Heart right ventricle (tissue), 16 donors: ENCODE measurements at regions of chr2 and their contacts with region 1.

Region 1: GRCh38 chr2:72150157-72150865 is 2.6 kb upstream of the CYP26B1 start:
- DNase-seq: peak; percentile 55 to 84
- ATAC-seq: peak; percentile 68 to 91 (median 80)
- H3K4me3 ChIP-seq: peak overlapping the region in 8 of 10 donors; percentile 18 to 75 (median 58)
- H3K27ac ChIP-seq: no peak overlapping the region
- H3K4me1 ChIP-seq: peaks cover 22 to 47% (median 42%) of the 10 kb centered on the region in 9 donors
- H3K27me3 ChIP-seq: peaks cover 15 to 83% (median 70%) of the 10 kb centered on the region in 7 donors
- CTCF ChIP-seq: peak; percentile 79 to 90 (median 85)

Region 2: DNA sequence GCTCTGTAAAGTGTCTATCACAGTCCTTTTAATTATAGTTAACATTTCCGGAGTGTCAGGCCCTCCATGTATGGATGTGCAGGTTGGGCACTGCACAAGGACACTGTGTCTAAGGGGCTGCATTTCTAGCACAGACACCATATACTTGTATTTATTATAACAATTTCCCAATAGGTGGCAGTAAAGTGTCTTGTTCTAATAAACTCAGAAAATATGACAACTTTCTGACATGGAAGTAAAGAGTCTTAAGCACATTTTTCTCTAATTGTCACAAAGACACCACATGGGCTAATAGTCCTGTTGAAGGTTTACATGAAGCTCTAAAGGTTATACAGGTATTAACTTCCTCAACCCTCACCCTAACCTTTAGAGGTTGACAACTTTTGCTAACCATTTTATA is 540.4 kb before region 1 on chr2:
- intact Hi-C with region 1: loop called in 6 of 10 experiments (anchors 5 to 10 kb)
- DNase-seq: no peak
- ATAC-seq: peak in 2 of 8 donors; percentile 27 to 36
- H3K4me3 ChIP-seq: no peak overlapping the region
- H3K27ac ChIP-seq: peak overlapping the region in 1 of 10 donors; percentile 0
- H3K4me1 ChIP-seq: peaks cover 14 to 46% (median 32%) of the 10 kb centered on the region in 9 donors
- H3K27me3 ChIP-seq: no peaks in the 10 kb centered on the region
- CTCF ChIP-seq: peak in 7 of 9 donors; percentile 30 to 59 (median 48)

Region 3: GRCh38 chr2:71807975-71808451 is 342.3 kb before region 1 on chr2:
- intact Hi-C with region 1: loop called in 9 of 10 experiments (anchors 2 to 5 kb)
- DNase-seq: peak; percentile 59 to 65
- ATAC-seq: peak; percentile 85 to 96 (median 93)
- H3K4me3 ChIP-seq: no peak overlapping the region
- H3K27ac ChIP-seq: no peak overlapping the region
- H3K4me1 ChIP-seq: peaks cover 0 to 18% (median 0%) of the 10 kb centered on the region in 9 donors
- H3K27me3 ChIP-seq: no peaks in the 10 kb centered on the region
- CTCF ChIP-seq: no peak

Region 4: DNA sequence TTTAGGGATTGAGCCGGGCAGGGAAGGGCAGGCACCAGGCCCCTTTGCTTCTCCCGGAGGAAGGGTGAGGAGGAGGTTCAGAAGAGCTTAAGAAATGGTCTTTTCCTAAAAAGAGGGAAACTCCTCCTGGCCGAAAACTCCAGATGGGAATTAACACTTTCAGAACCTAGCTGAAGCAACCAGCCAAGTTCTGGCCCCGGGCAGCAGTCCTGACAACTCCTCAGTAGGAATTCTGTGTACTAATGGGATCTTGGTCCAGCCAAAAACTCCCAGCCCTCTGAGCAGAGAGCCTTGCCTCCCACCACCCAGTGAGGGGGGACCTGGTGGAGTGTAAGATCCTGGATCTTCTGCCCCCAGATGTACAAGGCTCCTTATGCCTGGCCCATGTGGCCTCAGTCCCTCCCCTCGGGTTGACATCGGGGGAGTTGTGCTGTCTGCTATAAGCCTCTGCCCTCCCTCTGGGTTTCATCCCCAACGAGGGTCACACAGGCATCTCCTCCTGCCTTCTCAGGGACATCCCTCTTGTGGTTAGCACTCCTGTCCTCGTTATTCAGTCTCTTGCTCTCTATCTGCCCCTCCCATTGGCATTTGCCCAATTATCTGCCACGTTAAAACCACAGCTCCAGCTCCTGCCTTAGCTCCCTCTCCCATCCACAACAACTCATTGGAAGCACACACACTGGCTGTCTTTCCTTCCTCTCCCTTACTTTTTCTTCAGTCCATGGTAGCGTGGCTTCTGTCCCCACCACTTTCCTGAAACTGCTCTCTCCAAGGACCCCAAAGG is 187.2 kb before region 1 on chr2:
- intact Hi-C with region 1: no loop called
- DNase-seq: no peak
- ATAC-seq: peak in 1 of 8 donors; percentile 27
- H3K4me3 ChIP-seq: no peak overlapping the region
- H3K27ac ChIP-seq: no peak overlapping the region
- H3K4me1 ChIP-seq: peaks cover 0 to 3% (median 0%) of the 10 kb centered on the region in 9 donors
- H3K27me3 ChIP-seq: peaks cover 0 to 17% (median 0%) of the 10 kb centered on the region in 7 donors
- CTCF ChIP-seq: no peak

Region 5: GRCh38 chr2:72124376-72124775 is 25.9 kb before region 1 on chr2:
- intact Hi-C with region 1: loop called in 1 of 10 experiments (anchors 1 kb)
- DNase-seq: no peak
- ATAC-seq: no peak
- H3K4me3 ChIP-seq: no peak overlapping the region
- H3K27ac ChIP-seq: no peak overlapping the region
- H3K4me1 ChIP-seq: no peaks in the 10 kb centered on the region
- H3K27me3 ChIP-seq: peaks cover 0 to 29% (median 7%) of the 10 kb centered on the region in 7 donors
- CTCF ChIP-seq: no peak

Region 6: GRCh38 chr2:72238311-72238710 is 88.0 kb after region 1 on chr2:
- intact Hi-C with region 1: no loop called
- DNase-seq: no peak
- ATAC-seq: no peak
- H3K4me3 ChIP-seq: no peak overlapping the region
- H3K27ac ChIP-seq: no peak overlapping the region
- H3K4me1 ChIP-seq: peaks cover 0 to 24% (median 8%) of the 10 kb centered on the region in 9 donors
- H3K27me3 ChIP-seq: no peaks in the 10 kb centered on the region
- CTCF ChIP-seq: no peak

Region 7: DNA sequence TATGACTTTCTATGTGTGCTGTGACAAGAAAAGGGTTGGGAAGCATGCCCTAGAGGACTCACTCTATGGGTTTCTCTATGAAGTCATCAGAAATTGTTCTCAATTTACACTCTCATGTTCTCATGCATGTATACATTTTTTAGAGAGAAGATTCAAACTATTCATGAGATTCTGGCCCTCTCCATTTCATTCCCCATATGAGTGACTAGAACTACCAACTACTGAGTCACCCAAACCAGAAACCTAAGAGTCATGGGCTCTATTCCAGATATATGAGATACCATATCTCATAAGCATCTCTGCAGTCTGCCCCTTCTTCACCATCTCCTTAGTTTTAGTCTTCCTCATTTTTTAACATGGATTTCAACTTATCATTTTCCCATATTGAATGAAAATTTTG is 587.8 kb after region 1 on chr2:
- intact Hi-C with region 1: loop called in 3 of 10 experiments (anchors 10 kb)
- DNase-seq: no peak
- ATAC-seq: no peak
- H3K4me3 ChIP-seq: no peak overlapping the region
- H3K27ac ChIP-seq: no peak overlapping the region
- H3K4me1 ChIP-seq: no peaks in the 10 kb centered on the region
- H3K27me3 ChIP-seq: no peaks in the 10 kb centered on the region
- CTCF ChIP-seq: no peak